ENCODE measurements at regions of chr19 and their contacts with region 1.

Region 1: GRCh38 chr19:29811125-29812079 is at the start of gene CCNE1:
- DNase-seq: peak; percentile 96
- H3K4me3 Mint-ChIP-seq: peak within 1 kb of the TSS; percentile 84
- H3K27ac Mint-ChIP-seq: peak within 1 kb of the TSS; percentile 78
- H3K4me1 Mint-ChIP-seq: peaks cover 29% of the 10 kb centered on the region
- H3K27me3 Mint-ChIP-seq: no peaks in the 10 kb centered on the region
- total RNA-seq, gene CCNE1: 24.8 to 26.3 TPM

Region 2: GRCh38 chr19:29779921-29780320 is 31.5 kb before region 1 on chr19:
- CTCF ChIA-PET with region 1: no interaction called
- POLR2A ChIA-PET with region 1: no interaction called
- DNase-seq: no peak
- H3K4me3 Mint-ChIP-seq: no peak overlapping the region
- H3K27ac Mint-ChIP-seq: no peak overlapping the region
- H3K4me1 Mint-ChIP-seq: no peaks in the 10 kb centered on the region
- H3K27me3 Mint-ChIP-seq: peaks cover 3% of the 10 kb centered on the region

Region 3: GRCh38 chr19:29798774-29799497 is 12.5 kb before region 1 on chr19:
- CTCF ChIA-PET with region 1: no interaction called
- POLR2A ChIA-PET with region 1: no interaction called
- DNase-seq: no peak
- H3K4me3 Mint-ChIP-seq: no peak overlapping the region
- H3K27ac Mint-ChIP-seq: no peak overlapping the region
- H3K4me1 Mint-ChIP-seq: no peaks in the 10 kb centered on the region
- H3K27me3 Mint-ChIP-seq: peaks cover 2% of the 10 kb centered on the region

Region 4: DNA sequence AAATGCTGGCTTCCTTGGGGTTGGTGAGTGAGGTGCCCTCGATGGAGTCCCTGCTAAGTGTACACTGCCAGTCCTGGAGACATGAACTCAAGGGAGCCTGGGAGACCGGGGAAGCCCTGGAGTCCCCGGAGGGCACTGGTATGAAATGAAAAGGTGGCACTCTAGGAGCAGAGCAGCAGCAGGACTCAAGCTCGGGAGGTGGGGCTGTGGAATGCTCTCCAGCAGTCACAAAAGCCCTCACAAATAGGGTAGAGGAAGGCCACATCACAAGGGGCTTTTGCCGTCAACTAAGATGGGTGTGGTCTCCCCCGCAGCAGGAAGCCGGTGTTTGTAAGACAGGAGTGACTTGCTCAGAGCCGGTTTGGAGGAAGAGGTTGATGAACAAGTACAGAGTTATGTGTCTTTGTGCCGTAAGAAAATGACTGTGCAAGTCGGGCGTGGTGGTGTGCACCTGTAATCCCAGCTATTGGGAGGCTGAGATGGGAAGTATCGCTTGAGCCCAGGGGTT is 19.7 kb after region 1 on chr19:
- CTCF ChIA-PET with region 1: interaction called, 4 read pairs
- POLR2A ChIA-PET with region 1: interaction called, 67 read pairs
- DNase-seq: peak; percentile 74
- H3K4me3 Mint-ChIP-seq: peak overlapping the region; percentile 73
- H3K27ac Mint-ChIP-seq: peak overlapping the region; percentile 98
- H3K4me1 Mint-ChIP-seq: peaks cover 48% of the 10 kb centered on the region
- H3K27me3 Mint-ChIP-seq: no peaks in the 10 kb centered on the region

Region 5: GRCh38 chr19:29837448-29837981 is 26.1 kb after region 1 on chr19:
- CTCF ChIA-PET with region 1: interaction called, 5 read pairs
- POLR2A ChIA-PET with region 1: interaction called, 67 read pairs
- DNase-seq: peak; percentile 34
- H3K4me3 Mint-ChIP-seq: peak overlapping the region; percentile 56
- H3K27ac Mint-ChIP-seq: peak overlapping the region; percentile 91
- H3K4me1 Mint-ChIP-seq: peaks cover 49% of the 10 kb centered on the region
- H3K27me3 Mint-ChIP-seq: peaks cover 6% of the 10 kb centered on the region

Region 6: DNA sequence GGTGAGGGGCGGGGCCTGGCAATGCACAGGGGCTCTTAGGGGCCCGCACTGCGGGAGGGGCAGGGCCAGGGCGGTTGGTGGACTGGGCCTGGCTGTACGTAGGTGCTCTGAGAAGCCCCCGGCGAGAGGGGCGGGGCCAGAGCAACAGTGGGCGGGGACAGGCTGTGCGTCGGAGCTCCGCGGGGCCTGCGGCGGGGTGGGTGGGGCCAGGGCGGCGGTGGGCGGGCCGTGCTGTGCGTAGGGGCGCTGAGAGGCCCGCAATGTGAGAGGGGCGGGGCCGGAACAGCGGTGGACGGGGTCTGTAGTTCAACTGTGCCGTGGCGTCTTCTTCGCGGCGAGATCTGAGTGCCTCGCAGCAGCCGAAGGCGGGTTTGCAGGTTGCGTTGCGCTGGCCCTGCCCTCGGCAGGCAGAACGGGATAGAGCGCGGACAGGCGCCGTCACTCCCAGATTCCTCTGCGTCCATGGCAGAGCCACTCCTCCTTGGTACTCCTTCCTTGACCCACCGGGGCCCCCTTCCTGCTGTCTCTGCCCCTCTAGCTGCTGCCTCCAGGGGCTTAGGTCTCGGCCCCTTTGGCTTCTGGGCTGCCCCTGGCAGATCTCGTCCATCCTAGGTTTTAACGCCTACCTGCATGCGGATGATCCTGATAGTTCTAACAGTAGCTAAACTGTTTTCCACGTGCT is 33.6 kb after region 1 on chr19:
- CTCF ChIA-PET with region 1: interaction called, 7 read pairs
- POLR2A ChIA-PET with region 1: interaction called, 14 read pairs
- DNase-seq: peak; percentile 94
- H3K4me3 Mint-ChIP-seq: peak overlapping the region; percentile 80
- H3K27ac Mint-ChIP-seq: peak overlapping the region; percentile 78
- H3K4me1 Mint-ChIP-seq: peaks cover 17% of the 10 kb centered on the region
- H3K27me3 Mint-ChIP-seq: peaks cover 13% of the 10 kb centered on the region

Region 7: GRCh38 chr19:29858000-29858596 is 46.7 kb after region 1 on chr19:
- CTCF ChIA-PET with region 1: no interaction called
- POLR2A ChIA-PET with region 1: no interaction called
- DNase-seq: peak; percentile 53
- H3K4me3 Mint-ChIP-seq: no peak overlapping the region
- H3K27ac Mint-ChIP-seq: no peak overlapping the region
- H3K4me1 Mint-ChIP-seq: no peaks in the 10 kb centered on the region
- H3K27me3 Mint-ChIP-seq: peaks cover 6% of the 10 kb centered on the region